Activated T-helper 1 cell treated with anti-CD3 and anti-CD28 coated beads, Interleukin-12 subunit alpha, Interleukin-12 subunit beta, Interleukin-2, Interleukin-4 antibody, amounts not matched to agents 30 ng/mL and 10 ng/mL and 1 ng/mL, durations not matched to agents 14 hours and 24 hours and 36 hours (primary cell): ENCODE measurements at regions of chr7 and their contacts with region 1.

Region 1: GRCh38 chr7:135801045-135801693 is 52.6 kb upstream of the FAM180A start:
- DNase-seq: peak; percentile 20
- H3K4me3 Mint-ChIP-seq: no peak overlapping the region
- H3K27ac Mint-ChIP-seq: no peak overlapping the region
- H3K4me1 Mint-ChIP-seq: peaks cover 9% of the 10 kb centered on the region
- H3K27me3 Mint-ChIP-seq: peaks cover 9% of the 10 kb centered on the region

Region 2: DNA sequence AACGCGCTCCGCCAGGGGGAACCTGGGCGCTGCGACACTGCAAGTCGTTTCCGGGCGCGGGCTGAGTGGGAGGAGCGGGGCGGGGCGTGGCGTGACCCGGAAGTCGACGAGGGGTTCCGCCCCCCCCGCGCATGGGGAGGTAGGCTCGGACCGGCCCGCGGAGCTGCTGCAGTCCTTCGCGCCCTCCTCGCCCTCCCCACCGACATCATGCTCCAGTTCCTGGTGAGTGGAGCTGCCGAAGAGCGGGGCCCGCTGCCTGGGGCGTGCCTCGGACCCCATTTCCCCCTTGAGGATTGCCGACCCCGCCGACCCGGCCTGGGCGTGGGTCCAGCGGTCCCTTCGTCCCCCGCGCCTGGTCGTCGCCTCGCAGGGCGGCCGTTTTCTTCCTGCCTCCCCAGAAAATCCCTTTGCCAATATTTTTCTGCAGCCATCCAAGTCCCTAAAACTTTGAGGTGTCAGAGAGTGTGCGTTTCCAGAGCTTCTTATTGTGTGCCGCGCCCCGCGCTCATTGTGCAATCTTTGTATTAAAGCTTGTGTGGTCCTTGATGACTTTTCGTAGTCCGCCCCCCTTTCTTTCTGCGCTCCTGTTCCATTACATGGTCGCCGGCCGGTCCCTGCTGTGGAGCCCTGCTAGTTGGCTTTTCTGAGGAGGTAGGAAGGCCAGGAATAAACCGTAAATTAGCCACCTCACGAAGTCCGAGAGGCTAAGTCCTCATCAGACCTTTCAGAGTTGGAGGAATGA is 138.6 kb before region 1 on chr7 and contains the start of gene STMP1:
- intact Hi-C with region 1: no loop called
- DNase-seq: peak; percentile 93
- H3K4me3 Mint-ChIP-seq: peak within 1 kb of the TSS; percentile 97
- H3K27ac Mint-ChIP-seq: peak within 1 kb of the TSS; percentile 93
- H3K4me1 Mint-ChIP-seq: peaks cover 22% of the 10 kb centered on the region
- H3K27me3 Mint-ChIP-seq: no peaks in the 10 kb centered on the region
- total RNA-seq, gene STMP1: 22.7 and 24.7 TPM in 2 replicates

Region 3: GRCh38 chr7:135672560-135673359 is 128.4 kb before region 1 on chr7:
- intact Hi-C with region 1: loop called (anchors 5 kb)
- DNase-seq: no peak
- H3K4me3 Mint-ChIP-seq: no peak overlapping the region
- H3K27ac Mint-ChIP-seq: no peak overlapping the region
- H3K4me1 Mint-ChIP-seq: peaks cover 10% of the 10 kb centered on the region
- H3K27me3 Mint-ChIP-seq: peaks cover 2% of the 10 kb centered on the region

Region 4: GRCh38 chr7:135748770-135749169 is 52.4 kb before region 1 on chr7 and contains the start of gene FAM180A:
- intact Hi-C with region 1: no loop called
- DNase-seq: no peak
- H3K4me3 Mint-ChIP-seq: no peak within 1 kb of the TSS
- H3K27ac Mint-ChIP-seq: no peak within 1 kb of the TSS
- H3K4me1 Mint-ChIP-seq: no peaks in the 10 kb centered on the region
- H3K27me3 Mint-ChIP-seq: peaks cover 2% of the 10 kb centered on the region
- total RNA-seq, gene FAM180A: not detected in 2 replicates

Region 5: DNA sequence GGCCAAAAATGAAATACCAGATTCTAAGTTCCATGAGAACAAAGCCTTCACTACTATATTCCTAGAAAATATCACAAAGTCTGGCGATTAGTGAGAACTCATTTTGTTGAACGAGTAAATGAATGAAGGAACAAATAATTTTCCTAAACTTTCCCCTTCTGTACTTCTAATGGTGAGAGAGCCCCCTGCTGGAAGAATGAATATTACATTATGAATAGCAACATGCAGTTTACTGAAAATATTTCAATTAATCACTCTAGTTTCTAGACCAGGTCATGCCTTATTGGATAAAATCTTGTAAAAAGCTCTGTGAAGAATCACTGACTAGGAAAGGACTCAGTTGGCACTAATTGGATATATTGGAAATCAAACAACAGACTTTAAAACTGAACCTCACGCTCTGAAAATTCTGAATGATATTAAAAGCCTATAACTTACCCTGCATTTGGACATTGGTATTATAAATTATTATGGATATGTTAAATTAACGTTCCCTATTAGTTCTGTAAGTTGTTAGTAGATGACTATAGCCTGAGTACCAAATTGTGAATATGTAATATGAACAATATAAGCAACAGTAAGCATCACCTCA is 208.4 kb after region 1 on chr7:
- intact Hi-C with region 1: loop called (anchors 1 kb)
- DNase-seq: no peak
- H3K4me3 Mint-ChIP-seq: no peak overlapping the region
- H3K27ac Mint-ChIP-seq: no peak overlapping the region
- H3K4me1 Mint-ChIP-seq: peaks cover 4% of the 10 kb centered on the region
- H3K27me3 Mint-ChIP-seq: no peaks in the 10 kb centered on the region

Region 6: GRCh38 chr7:136030862-136031318 is 229.7 kb after region 1 on chr7:
- intact Hi-C with region 1: loop called (anchors 5 kb)
- DNase-seq: no peak
- H3K4me3 Mint-ChIP-seq: no peak overlapping the region
- H3K27ac Mint-ChIP-seq: peak overlapping the region; percentile 54
- H3K4me1 Mint-ChIP-seq: peaks cover 12% of the 10 kb centered on the region
- H3K27me3 Mint-ChIP-seq: peaks cover 1% of the 10 kb centered on the region

Region 7: DNA sequence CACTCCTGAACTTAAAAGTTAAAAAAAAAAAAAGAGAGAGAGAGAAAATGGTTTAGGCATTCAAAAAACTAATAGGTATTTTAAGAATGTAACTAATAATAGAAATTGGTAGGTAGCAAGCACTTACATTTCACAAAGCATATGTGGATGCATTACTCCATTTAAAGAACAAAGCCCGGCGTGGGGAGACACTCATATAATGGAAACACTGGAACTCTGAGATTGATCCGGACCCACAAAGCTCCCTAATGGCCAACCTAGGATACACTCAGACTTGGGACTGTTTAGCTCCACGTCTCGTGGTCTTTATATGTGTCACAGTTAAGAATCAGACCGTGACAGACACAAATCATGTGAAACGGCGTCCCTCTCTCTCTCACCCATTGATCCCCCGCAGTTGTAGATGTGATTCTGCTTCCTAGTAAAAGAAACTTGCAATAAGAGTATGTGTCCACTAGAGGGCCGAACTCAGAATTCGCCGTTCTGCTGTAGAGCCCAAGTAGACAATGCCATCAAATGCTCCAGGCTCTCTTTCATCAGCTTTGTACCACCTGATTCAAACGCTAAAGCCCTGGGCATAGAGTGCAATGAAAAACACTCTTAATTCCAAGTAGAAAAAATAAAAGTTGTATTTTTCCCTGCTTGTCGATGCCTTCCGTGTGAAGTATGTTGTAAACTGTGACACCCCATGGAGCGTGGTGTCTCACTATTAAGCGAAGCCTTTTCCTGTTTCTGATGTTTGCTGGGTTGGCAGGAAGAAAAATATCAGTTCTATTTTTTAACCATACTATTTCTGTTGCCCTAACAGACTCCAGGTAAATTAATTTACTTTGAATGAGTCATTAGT is 605.0 kb after region 1 on chr7:
- intact Hi-C with region 1: loop called (anchors 10 kb)
- DNase-seq: no peak
- H3K4me3 Mint-ChIP-seq: no peak overlapping the region
- H3K27ac Mint-ChIP-seq: no peak overlapping the region
- H3K4me1 Mint-ChIP-seq: peaks cover 7% of the 10 kb centered on the region
- H3K27me3 Mint-ChIP-seq: no peaks in the 10 kb centered on the region